Natural killer cell (primary cell): ENCODE measurements at regions of chr20 and their contacts with region 1.

Region 1: GRCh38 chr20:50516180-50516934 is 6.2 kb downstream of the PTPN1 start:
- DNase-seq: peak in 1 of 2 donors; percentile 19
- ATAC-seq: peak in 2 of 3 donors; percentile 17 to 36
- H3K4me3 ChIP-seq: no peak overlapping the region
- H3K4me3 Mint-ChIP-seq: peak overlapping the region; percentile 73
- H3K27ac ChIP-seq: peak overlapping the region; percentile 55
- H3K27ac Mint-ChIP-seq: peak overlapping the region; percentile 95 to 98
- H3K4me1 ChIP-seq: peaks cover 42% of the 10 kb centered on the region
- H3K4me1 Mint-ChIP-seq: peaks cover 97% of the 10 kb centered on the region in 2 donors
- H3K27me3 ChIP-seq: no peaks in the 10 kb centered on the region
- H3K27me3 Mint-ChIP-seq: no peaks in the 10 kb centered on the region
- CTCF ChIP-seq: no peak

Region 2: DNA sequence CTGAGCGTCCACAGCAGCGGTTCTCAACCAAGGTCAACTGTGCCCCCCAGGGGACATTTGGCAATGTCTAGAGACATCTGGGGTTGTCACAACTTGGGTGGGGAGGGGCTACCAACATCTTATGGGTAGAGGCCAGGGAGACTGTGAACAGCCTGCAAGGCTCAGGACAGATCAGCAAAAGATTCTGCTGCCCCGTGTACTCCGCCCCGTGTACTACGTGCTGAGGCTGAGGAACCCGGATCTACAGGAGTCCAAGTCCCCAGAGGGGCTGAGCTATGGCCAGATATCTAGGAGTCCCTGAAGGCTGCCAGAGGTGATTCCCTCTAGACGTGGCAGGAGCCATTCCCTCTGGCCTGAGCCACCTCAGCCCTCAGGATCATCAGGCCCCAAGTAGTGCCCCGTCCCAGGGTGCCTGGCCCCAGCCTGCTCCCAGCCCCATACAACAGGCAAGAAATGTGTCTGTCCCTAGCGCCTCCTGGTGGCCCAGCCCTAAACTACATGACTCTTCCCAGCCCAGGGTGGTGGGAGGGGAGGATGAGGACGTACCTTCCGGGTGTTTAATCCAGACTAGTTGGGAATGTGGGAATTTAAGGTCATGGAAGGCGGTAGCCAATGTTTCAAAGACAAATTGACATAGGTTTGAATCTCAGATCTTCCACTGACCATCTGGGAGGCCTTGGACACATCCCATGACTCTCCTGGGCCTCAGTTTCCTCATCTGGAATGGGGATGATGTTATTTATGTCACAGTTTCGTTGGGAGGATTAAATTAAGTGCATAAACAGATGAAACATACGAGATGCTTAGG is 55.7 kb before region 1 on chr20:
- intact Hi-C with region 1: no loop called
- DNase-seq: peak; percentile 85 to 86
- ATAC-seq: peak; percentile 93 to 94 (median 93)
- H3K4me3 ChIP-seq: no peak overlapping the region
- H3K4me3 Mint-ChIP-seq: no peak overlapping the region
- H3K27ac ChIP-seq: no peak overlapping the region
- H3K27ac Mint-ChIP-seq: no peak overlapping the region
- H3K4me1 ChIP-seq: peaks cover 24% of the 10 kb centered on the region
- H3K4me1 Mint-ChIP-seq: peaks cover 4 to 15% of the 10 kb centered on the region in 2 donors
- H3K27me3 ChIP-seq: peaks cover 22% of the 10 kb centered on the region
- H3K27me3 Mint-ChIP-seq: peaks cover 22 to 33% of the 10 kb centered on the region in 2 donors
- CTCF ChIP-seq: peak; percentile 98

Region 3: DNA sequence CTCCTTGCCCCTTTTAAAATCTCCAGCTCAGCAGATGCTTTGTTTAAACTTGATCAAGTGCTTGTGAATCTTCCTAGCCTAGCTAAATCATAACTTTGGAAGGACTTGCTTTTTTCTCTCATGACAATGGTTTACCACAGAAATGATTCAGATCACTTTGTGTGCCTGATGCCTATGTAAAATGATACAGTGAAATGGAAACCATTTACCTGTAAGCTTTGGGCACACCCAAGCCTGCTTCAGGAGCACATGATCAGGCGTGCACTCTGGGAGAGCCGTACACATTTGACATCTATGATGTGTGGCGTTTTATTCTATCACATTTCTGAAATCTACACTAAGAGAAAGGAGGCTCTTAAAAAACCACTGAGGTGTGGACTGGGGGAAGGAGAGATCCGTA is 34.9 kb after region 1 on chr20:
- intact Hi-C with region 1: loop called (anchors 5 kb)
- DNase-seq: no peak
- ATAC-seq: no peak
- H3K4me3 ChIP-seq: no peak overlapping the region
- H3K4me3 Mint-ChIP-seq: no peak overlapping the region
- H3K27ac ChIP-seq: no peak overlapping the region
- H3K27ac Mint-ChIP-seq: peak overlapping the region; percentile 29 to 30
- H3K4me1 ChIP-seq: peaks cover 13% of the 10 kb centered on the region
- H3K4me1 Mint-ChIP-seq: peaks cover 21 to 24% of the 10 kb centered on the region in 2 donors
- H3K27me3 ChIP-seq: no peaks in the 10 kb centered on the region
- H3K27me3 Mint-ChIP-seq: no peaks in the 10 kb centered on the region
- CTCF ChIP-seq: no peak

Region 4: DNA sequence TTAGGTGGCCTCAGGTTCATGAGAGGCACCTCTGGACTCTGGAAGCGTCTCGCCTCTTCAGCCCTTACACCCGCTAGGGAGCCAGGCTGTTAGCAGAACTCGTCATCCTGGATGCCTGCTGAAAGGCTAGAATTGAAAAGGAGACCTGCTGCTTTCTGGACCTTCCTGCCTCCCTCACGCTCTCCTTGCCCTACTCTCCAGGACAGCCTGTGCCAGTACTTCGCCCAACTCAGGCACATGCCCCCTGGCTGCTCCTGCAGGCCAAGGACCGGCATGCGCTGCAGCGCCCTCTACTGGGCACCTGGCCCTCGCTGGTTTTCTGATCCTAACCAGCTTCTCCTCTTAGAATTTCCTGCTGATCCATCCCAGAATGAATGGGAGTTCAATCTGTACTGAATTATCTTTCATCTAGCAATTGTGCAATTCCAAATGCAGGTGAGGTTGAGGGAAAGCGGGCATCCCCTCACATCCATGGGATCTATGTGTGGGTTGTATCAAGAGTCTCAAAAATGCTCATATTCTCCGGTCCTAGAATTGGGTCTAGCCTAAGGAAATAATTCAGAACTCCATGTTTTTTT is 71.8 kb after region 1 on chr20:
- intact Hi-C with region 1: no loop called
- DNase-seq: peak; percentile 69 to 83
- ATAC-seq: peak; percentile 76 to 87 (median 81)
- H3K4me3 ChIP-seq: no peak overlapping the region
- H3K4me3 Mint-ChIP-seq: no peak overlapping the region
- H3K27ac ChIP-seq: no peak overlapping the region
- H3K27ac Mint-ChIP-seq: peak overlapping the region; percentile 32 to 64
- H3K4me1 ChIP-seq: no peaks in the 10 kb centered on the region
- H3K4me1 Mint-ChIP-seq: peaks cover 0 to 7% of the 10 kb centered on the region in 2 donors
- H3K27me3 ChIP-seq: no peaks in the 10 kb centered on the region
- H3K27me3 Mint-ChIP-seq: no peaks in the 10 kb centered on the region
- CTCF ChIP-seq: peak; percentile 90